Activated naive CD4-positive, alpha-beta T cell treated with anti-CD3 and anti-CD28 coated beads, Interleukin-2, amount 10 ng/mL, durations not matched to agents 7 days and 5 days (primary cell): ENCODE measurements at regions of chr1 and their contacts with region 1.

Region 1: GRCh38 chr1:24111996-24112779 is at the start of gene MYOM3:
- DNase-seq: peak; percentile 77
- H3K4me3 Mint-ChIP-seq: no peak within 1 kb of the TSS
- H3K27ac Mint-ChIP-seq: no peak within 1 kb of the TSS
- H3K4me1 Mint-ChIP-seq: peaks cover 7% of the 10 kb centered on the region
- H3K27me3 Mint-ChIP-seq: peaks cover 65% of the 10 kb centered on the region

Region 2: GRCh38 chr1:24070821-24071393 is 41.3 kb before region 1 on chr1:
- CTCF ChIA-PET with region 1: interaction called, 15 read pairs
- DNase-seq: peak; percentile 84
- H3K4me3 Mint-ChIP-seq: no peak overlapping the region
- H3K27ac Mint-ChIP-seq: no peak overlapping the region
- H3K4me1 Mint-ChIP-seq: no peaks in the 10 kb centered on the region
- H3K27me3 Mint-ChIP-seq: peaks cover 41% of the 10 kb centered on the region

Region 3: GRCh38 chr1:24321697-24322469 is 209.7 kb after region 1 on chr1:
- CTCF ChIA-PET with region 1: no interaction called
- DNase-seq: peak; percentile 85
- H3K4me3 Mint-ChIP-seq: peak overlapping the region; percentile 69
- H3K27ac Mint-ChIP-seq: peak overlapping the region; percentile 75
- H3K4me1 Mint-ChIP-seq: peaks cover 48% of the 10 kb centered on the region
- H3K27me3 Mint-ChIP-seq: peaks cover 100% of the 10 kb centered on the region